Heart left ventricle (tissue), 16 donors: ENCODE measurements at regions of chr12 and their contacts with region 1.

Region 1: DNA sequence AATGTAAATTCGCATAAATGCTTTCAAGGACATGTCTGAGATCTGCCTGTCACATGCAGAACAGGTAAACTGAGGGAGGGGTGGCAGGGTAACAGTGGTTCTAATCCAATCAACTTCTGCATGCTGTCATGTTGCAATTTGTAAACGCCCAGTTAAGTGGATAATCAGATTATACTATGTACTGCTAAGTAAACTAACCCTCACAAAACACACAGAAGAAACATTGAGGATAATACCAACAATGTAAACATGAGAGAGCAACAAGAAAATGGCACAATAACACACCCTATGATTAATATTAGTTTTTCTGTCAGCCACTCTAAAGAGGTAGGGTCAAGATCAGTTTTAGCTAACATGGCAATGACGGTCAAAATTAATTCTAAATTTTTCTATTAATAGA is 123.7 kb downstream of the KIF21A start:
- DNase-seq: no peak
- ATAC-seq: no peak
- H3K4me3 ChIP-seq: no peak overlapping the region
- H3K27ac ChIP-seq: no peak overlapping the region
- H3K4me1 ChIP-seq: no peaks in the 10 kb centered on the region
- H3K27me3 ChIP-seq: no peaks in the 10 kb centered on the region
- CTCF ChIP-seq: no peak
- POLR2A ChIP-seq: no peak

Region 2: GRCh38 chr12:39443081-39443928 is 124.1 kb after region 1 on chr12 and contains the start of gene KIF21A:
- intact Hi-C with region 1: loop called in 2 of 10 experiments (anchors 5 kb)
- DNase-seq: peak; percentile 85 to 93 (median 92)
- ATAC-seq: peak; percentile 94 to 98 (median 94)
- H3K4me3 ChIP-seq: peak within 1 kb of the TSS; percentile 65 to 96 (median 81)
- H3K27ac ChIP-seq: peak within 1 kb of the TSS; percentile 51 to 93 (median 86)
- H3K4me1 ChIP-seq: peaks cover 0 to 23% (median 4%) of the 10 kb centered on the region in 12 donors
- H3K27me3 ChIP-seq: peaks cover 0 to 5% (median 0%) of the 10 kb centered on the region in 9 donors
- CTCF ChIP-seq: peak; percentile 29 to 80 (median 61)
- POLR2A ChIP-seq: peak in 1 of 2 donors; percentile 45
- total RNA-seq, gene KIF21A: 38.8 to 53.1 (median 44.5) TPM

Region 3: GRCh38 chr12:39451977-39452376 is 132.8 kb after region 1 on chr12:
- intact Hi-C with region 1: loop called in 1 of 10 experiments (anchors 5 kb)
- DNase-seq: no peak
- ATAC-seq: no peak
- H3K4me3 ChIP-seq: no peak overlapping the region
- H3K27ac ChIP-seq: no peak overlapping the region
- H3K4me1 ChIP-seq: no peaks in the 10 kb centered on the region
- H3K27me3 ChIP-seq: no peaks in the 10 kb centered on the region
- CTCF ChIP-seq: no peak
- POLR2A ChIP-seq: no peak

Region 4: DNA sequence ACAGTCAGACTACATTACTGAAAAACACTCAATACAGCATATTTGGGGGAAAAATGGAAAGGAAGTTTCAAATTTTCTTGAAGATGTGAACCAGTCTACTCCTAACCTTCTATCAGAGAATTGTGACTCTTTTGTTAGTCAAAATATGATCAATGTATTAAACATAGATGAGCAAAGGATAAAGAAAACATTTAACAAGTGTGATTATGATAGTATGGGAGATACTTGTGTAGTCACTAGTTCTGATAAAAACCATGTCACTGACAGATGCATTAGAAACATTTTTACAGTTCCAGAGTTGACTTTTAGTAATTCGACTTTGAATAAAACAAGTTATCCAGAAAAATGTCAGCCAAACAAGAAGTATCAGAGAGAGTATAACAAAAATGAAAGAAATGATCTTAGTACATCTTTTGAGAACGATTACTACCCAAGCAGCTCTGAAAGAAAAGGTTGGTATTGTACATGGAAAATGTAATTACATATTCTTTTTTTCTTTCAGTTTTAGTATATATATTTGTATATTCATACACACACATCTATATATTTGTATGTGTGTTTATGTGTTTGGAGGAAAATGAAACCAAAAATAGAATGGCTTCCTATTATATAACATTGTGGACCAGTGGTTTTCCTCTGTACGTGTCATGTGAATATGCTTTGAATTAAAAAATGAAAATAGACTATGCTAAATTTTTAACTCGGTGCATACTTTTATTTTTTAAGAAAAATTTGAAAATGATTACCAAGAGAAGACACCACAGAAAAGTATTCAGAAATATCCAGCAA is 363.7 kb after region 1 on chr12:
- intact Hi-C with region 1: loop called in 1 of 10 experiments (anchors 10 kb)
- DNase-seq: no peak
- ATAC-seq: no peak
- H3K4me3 ChIP-seq: peak overlapping the region in 3 of 12 donors; percentile 6 to 19 (median 10)
- H3K27ac ChIP-seq: peak overlapping the region in 1 of 12 donors; percentile 18
- H3K4me1 ChIP-seq: no peaks in the 10 kb centered on the region
- H3K27me3 ChIP-seq: no peaks in the 10 kb centered on the region
- CTCF ChIP-seq: no peak
- POLR2A ChIP-seq: no peak

Region 5: GRCh38 chr12:39692258-39692853 is 373.2 kb after region 1 on chr12:
- intact Hi-C with region 1: loop called in 5 of 10 experiments (anchors 5 to 10 kb)
- DNase-seq: no peak
- ATAC-seq: no peak
- H3K4me3 ChIP-seq: no peak overlapping the region
- H3K27ac ChIP-seq: no peak overlapping the region
- H3K4me1 ChIP-seq: no peaks in the 10 kb centered on the region
- H3K27me3 ChIP-seq: no peaks in the 10 kb centered on the region
- CTCF ChIP-seq: peak in 10 of 12 donors; percentile 22 to 55 (median 44)
- POLR2A ChIP-seq: no peak